H1 (cell line): ENCODE measurements at regions of chr11 and their contacts with region 1.

Region 1: GRCh38 chr11:125345421-125346178 is 150.5 kb downstream of the FEZ1 start:
- DNase-seq: peak in 1 of 2 experiments; percentile 87
- H3K4me3 ChIP-seq: no peak overlapping the region
- H3K27ac ChIP-seq: no peak overlapping the region
- H3K4me1 ChIP-seq: peaks cover 0 to 29% (median 13%) of the 10 kb centered on the region in 4 experiments; a peak in 6 of 7 replicates
- H3K27me3 ChIP-seq: peaks cover 0 to 10% (median 3%) of the 10 kb centered on the region in 4 experiments; a peak in 3 of 7 replicates
- CTCF ChIP-seq: peak; percentile 82 to 85 (median 83)
- EP300 ChIP-seq: no peak
- POLR2A ChIP-seq: no peak
- RAD21 ChIP-seq: peak; percentile 71 to 81

Region 2: DNA sequence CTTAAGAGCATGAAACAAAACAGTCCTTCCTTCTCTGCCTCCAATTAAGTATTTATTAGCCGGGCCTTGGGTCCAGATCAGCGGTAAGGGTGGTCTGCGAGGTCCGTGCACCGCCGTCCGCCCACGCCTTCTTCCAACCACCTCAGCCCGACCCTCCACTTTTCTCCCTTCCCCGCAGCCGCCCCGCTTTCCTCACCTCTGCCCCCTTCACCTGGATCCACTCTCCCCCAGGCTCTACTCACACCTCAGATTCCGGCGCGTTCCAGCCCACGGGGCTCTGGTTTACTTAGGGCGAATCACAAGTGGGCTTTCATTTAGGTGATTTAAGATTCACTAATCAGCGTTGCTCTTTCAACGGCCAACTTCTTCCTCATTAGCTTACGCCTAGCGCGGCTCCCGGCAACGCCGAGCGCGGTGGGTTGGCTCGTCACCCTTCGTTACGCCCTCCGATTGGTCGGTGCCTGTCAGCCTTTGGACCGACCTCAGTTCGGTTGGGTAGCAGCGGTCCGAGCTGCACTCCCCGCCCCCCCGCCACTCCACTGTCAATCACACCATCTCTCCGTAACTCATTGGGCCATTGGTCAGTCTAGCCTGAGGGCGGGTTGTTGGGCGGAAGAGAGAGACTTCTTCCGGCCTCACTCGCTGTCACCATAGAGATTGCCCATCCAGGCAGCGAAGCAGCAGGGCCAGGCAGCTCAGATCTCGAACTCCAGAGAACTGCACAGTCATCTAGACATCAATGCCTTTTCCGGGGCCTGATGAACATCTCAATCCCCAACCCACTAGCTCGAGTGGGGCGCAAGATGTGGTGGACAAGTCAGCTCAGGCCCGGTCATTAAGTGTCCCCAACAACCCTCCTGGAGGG is 234.0 kb before region 1 on chr11 and contains the start of gene TMEM218:
- CTCF ChIA-PET with region 1: interaction called, 13 read pairs
- POLR2A ChIA-PET with region 1: no interaction called
- DNase-seq: peak; percentile 92 to 99
- H3K4me3 ChIP-seq: peak within 1 kb of the TSS; percentile 59 to 80 (median 76)
- H3K27ac ChIP-seq: peak within 1 kb of the TSS; percentile 63
- H3K4me1 ChIP-seq: peaks cover 2 to 6% (median 3%) of the 10 kb centered on the region in 4 experiments; a peak in 3 of 7 replicates
- H3K27me3 ChIP-seq: no peaks in the 10 kb centered on the region
- CTCF ChIP-seq: no peak
- EP300 ChIP-seq: no peak
- POLR2A ChIP-seq: no peak
- RAD21 ChIP-seq: no peak
- total RNA-seq, gene TMEM218: 17.0 and 17.3 TPM in 2 replicates

Region 3: GRCh38 chr11:125164422-125165110 is 181.0 kb before region 1 on chr11 and contains the start of gene PKNOX2:
- CTCF ChIA-PET with region 1: interaction called, 123 read pairs
- POLR2A ChIA-PET with region 1: interaction called, 3 read pairs
- DNase-seq: peak in 1 of 2 experiments; percentile 93
- H3K4me3 ChIP-seq: peak within 1 kb of the TSS; percentile 52 to 74 (median 60)
- H3K27ac ChIP-seq: peak within 1 kb of the TSS; percentile 87
- H3K4me1 ChIP-seq: peaks cover 21 to 44% (median 29%) of the 10 kb centered on the region in 4 experiments
- H3K27me3 ChIP-seq: peaks cover 14 to 44% (median 40%) of the 10 kb centered on the region in 4 experiments
- CTCF ChIP-seq: peak; percentile 45 to 72 (median 67)
- EP300 ChIP-seq: peak in 1 of 2 experiments; percentile 6; a peak in 1 of 3 replicates
- POLR2A ChIP-seq: no peak
- RAD21 ChIP-seq: peak; percentile 54 to 68; a peak in 3 of 4 replicates
- total RNA-seq, gene PKNOX2: 1.9 and 2.0 TPM in 2 replicates

Region 4: GRCh38 chr11:125257190-125257579 is 88.4 kb before region 1 on chr11:
- CTCF ChIA-PET with region 1: interaction called, 81 read pairs
- POLR2A ChIA-PET with region 1: no interaction called
- DNase-seq: peak in 1 of 2 experiments; percentile 59
- H3K4me3 ChIP-seq: no peak overlapping the region
- H3K27ac ChIP-seq: no peak overlapping the region
- H3K4me1 ChIP-seq: peaks cover 3 to 18% (median 7%) of the 10 kb centered on the region in 4 experiments; a peak in 6 of 7 replicates
- H3K27me3 ChIP-seq: peaks cover 0 to 11% (median 8%) of the 10 kb centered on the region in 4 experiments; a peak in 3 of 7 replicates
- CTCF ChIP-seq: peak; percentile 57 to 79 (median 68)
- EP300 ChIP-seq: no peak
- POLR2A ChIP-seq: no peak
- RAD21 ChIP-seq: peak; percentile 64 to 78

Region 5: DNA sequence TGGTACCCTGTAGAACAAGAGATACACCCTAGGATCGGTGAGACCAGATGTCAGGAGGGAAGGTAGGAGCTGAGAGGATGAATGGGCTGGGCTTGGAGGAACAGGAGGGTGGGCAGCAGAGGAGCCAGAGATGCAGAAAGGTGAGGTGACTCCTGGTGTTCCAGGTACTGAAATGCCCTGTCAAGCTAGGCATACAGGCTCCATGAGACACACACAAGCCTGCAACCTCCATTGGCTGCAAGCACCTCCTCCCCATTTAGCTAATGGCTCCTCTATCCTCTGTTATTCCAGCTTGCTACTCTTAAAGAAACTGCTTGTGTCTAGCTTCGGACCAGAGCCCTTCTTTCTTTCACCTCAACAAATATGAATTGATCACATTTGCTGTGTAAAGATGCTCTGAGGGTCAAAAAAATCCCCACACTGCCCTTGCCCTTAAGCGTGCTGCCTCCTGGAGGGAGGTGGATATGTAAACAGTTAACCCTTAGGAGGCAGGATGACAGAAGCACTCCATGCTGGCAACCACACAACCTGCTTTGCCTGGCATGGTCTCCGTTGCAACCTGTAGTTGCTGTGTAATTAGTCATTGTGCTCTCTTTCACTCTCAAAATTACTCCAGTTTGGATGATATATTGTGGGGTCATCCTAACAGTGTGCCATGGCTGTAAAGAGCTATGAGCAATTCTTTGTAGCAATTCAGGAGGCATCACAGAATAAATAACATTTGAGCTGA is 25.1 kb before region 1 on chr11:
- CTCF ChIA-PET with region 1: interaction called, 198 read pairs
- POLR2A ChIA-PET with region 1: no interaction called
- DNase-seq: no peak
- H3K4me3 ChIP-seq: no peak overlapping the region
- H3K27ac ChIP-seq: no peak overlapping the region
- H3K4me1 ChIP-seq: peaks cover 0 to 6% (median 3%) of the 10 kb centered on the region in 4 experiments; a peak in 4 of 7 replicates
- H3K27me3 ChIP-seq: no peaks in the 10 kb centered on the region
- CTCF ChIP-seq: peak in 2 of 3 experiments; percentile 4 to 38; a peak in 2 of 4 replicates
- EP300 ChIP-seq: no peak
- POLR2A ChIP-seq: no peak
- RAD21 ChIP-seq: peak; percentile 39 to 55

Region 6: GRCh38 chr11:125404776-125405435 is 59.3 kb after region 1 on chr11:
- CTCF ChIA-PET with region 1: interaction called, 223 read pairs
- POLR2A ChIA-PET with region 1: no interaction called
- DNase-seq: peak in 1 of 2 experiments; percentile 97
- H3K4me3 ChIP-seq: no peak overlapping the region
- H3K27ac ChIP-seq: no peak overlapping the region
- H3K4me1 ChIP-seq: peaks cover 12 to 29% (median 17%) of the 10 kb centered on the region in 4 experiments
- H3K27me3 ChIP-seq: peaks cover 0 to 4% (median under 1%) of the 10 kb centered on the region in 4 experiments; a peak in 2 of 7 replicates
- CTCF ChIP-seq: peak; percentile 94 to 98 (median 96)
- EP300 ChIP-seq: no peak
- POLR2A ChIP-seq: no peak
- RAD21 ChIP-seq: peak; percentile 93 to 98

Region 7: GRCh38 chr11:125649465-125650166 is 304.0 kb after region 1 on chr11:
- CTCF ChIA-PET with region 1: no interaction called
- POLR2A ChIA-PET with region 1: no interaction called
- DNase-seq: no peak
- H3K4me3 ChIP-seq: no peak overlapping the region
- H3K27ac ChIP-seq: no peak overlapping the region
- H3K4me1 ChIP-seq: no peaks in the 10 kb centered on the region
- H3K27me3 ChIP-seq: no peaks in the 10 kb centered on the region
- CTCF ChIP-seq: no peak
- EP300 ChIP-seq: no peak
- POLR2A ChIP-seq: no peak
- RAD21 ChIP-seq: no peak